CD4-positive, alpha-beta T cell (primary cell): ENCODE measurements at regions of chr7 and their contacts with region 1.

Region 1: GRCh38 chr7:111043533-111043932 is 47.4 kb upstream of the LRRN3 start:
- DNase-seq: no peak
- ATAC-seq: no peak
- H3K4me3 ChIP-seq: no peak overlapping the region
- H3K4me3 Mint-ChIP-seq: no peak overlapping the region
- H3K27ac ChIP-seq: no peak overlapping the region
- H3K27ac Mint-ChIP-seq: no peak overlapping the region
- H3K4me1 ChIP-seq: no peaks in the 10 kb centered on the region
- H3K4me1 Mint-ChIP-seq: peaks cover 16% of the 10 kb centered on the region
- H3K27me3 ChIP-seq: no peaks in the 10 kb centered on the region
- H3K27me3 Mint-ChIP-seq: no peaks in the 10 kb centered on the region
- CTCF ChIP-seq: no peak

Region 2: GRCh38 chr7:110943701-110944345 is 99.7 kb before region 1 on chr7:
- CTCF ChIA-PET with region 1: no interaction called
- POLR2A ChIA-PET with region 1: no interaction called
- intact Hi-C with region 1: no loop called
- DNase-seq: no peak
- ATAC-seq: no peak
- H3K4me3 ChIP-seq: no peak overlapping the region
- H3K4me3 Mint-ChIP-seq: no peak overlapping the region
- H3K27ac ChIP-seq: no peak overlapping the region
- H3K27ac Mint-ChIP-seq: no peak overlapping the region
- H3K4me1 ChIP-seq: no peaks in the 10 kb centered on the region
- H3K4me1 Mint-ChIP-seq: peaks cover 8% of the 10 kb centered on the region
- H3K27me3 ChIP-seq: no peaks in the 10 kb centered on the region
- H3K27me3 Mint-ChIP-seq: no peaks in the 10 kb centered on the region
- CTCF ChIP-seq: no peak

Region 3: DNA sequence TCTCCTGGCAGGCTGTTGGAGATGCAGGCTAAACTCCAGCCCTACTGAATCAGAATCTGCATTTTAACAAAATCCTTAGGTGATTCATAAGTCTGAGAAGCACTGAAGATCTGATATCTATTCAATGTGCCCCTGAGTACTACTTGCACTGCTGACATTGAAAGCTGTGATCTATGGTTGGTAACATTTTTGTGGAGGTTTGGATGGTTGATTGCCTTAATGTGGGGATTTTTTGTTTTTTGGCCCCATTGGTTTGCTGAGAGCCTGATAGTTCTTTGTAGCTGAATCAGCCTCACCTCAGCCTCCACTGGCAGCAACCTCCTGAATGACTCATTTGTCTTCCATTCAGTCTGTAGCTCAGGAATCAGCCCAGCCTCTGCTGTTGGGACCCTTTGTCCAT is 32.7 kb after region 1 on chr7:
- CTCF ChIA-PET with region 1: no interaction called
- POLR2A ChIA-PET with region 1: interaction called, 3 read pairs
- intact Hi-C with region 1: loop called in 1 of 2 experiments (anchors 5 kb)
- DNase-seq: peak in 1 of 14 experiments; percentile 49
- ATAC-seq: no peak
- H3K4me3 ChIP-seq: no peak overlapping the region
- H3K4me3 Mint-ChIP-seq: no peak overlapping the region
- H3K27ac ChIP-seq: no peak overlapping the region
- H3K27ac Mint-ChIP-seq: no peak overlapping the region
- H3K4me1 ChIP-seq: peaks cover under 1% of the 10 kb centered on the region
- H3K4me1 Mint-ChIP-seq: peaks cover 62% of the 10 kb centered on the region
- H3K27me3 ChIP-seq: no peaks in the 10 kb centered on the region
- H3K27me3 Mint-ChIP-seq: no peaks in the 10 kb centered on the region
- CTCF ChIP-seq: no peak

Region 4: DNA sequence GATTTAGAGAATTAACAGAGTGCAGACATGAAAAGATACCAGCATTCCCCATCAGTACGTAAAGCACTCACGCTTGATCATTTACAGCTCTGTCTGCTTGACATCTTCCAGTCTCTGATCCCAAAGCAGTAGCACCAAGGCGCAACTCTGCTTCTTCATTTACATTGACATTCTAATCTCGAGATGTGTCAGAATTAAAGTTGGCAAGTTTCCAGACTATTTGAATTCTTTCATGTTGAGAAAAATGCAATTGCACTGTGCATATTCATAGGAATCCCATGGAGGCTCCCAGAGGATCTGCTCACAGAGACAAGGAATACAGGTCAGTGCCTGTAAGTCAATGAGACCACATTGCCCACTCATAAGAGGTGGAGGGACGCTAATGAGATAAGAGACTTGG is 231.3 kb after region 1 on chr7:
- CTCF ChIA-PET with region 1: no interaction called
- POLR2A ChIA-PET with region 1: no interaction called
- intact Hi-C with region 1: no loop called
- DNase-seq: no peak
- ATAC-seq: no peak
- H3K4me3 ChIP-seq: no peak overlapping the region
- H3K4me3 Mint-ChIP-seq: no peak overlapping the region
- H3K27ac ChIP-seq: no peak overlapping the region
- H3K27ac Mint-ChIP-seq: no peak overlapping the region
- H3K4me1 ChIP-seq: no peaks in the 10 kb centered on the region
- H3K4me1 Mint-ChIP-seq: no peaks in the 10 kb centered on the region
- H3K27me3 ChIP-seq: no peaks in the 10 kb centered on the region
- H3K27me3 Mint-ChIP-seq: no peaks in the 10 kb centered on the region
- CTCF ChIP-seq: no peak